ENCODE measurements at regions of chr15 and their contacts with region 1.

Region 1: GRCh38 chr15:40405501-40406381 is at the start of gene IVD:
- DNase-seq: peak; percentile 84
- ATAC-seq: peak; percentile 97
- H3K4me3 ChIP-seq: peak within 1 kb of the TSS; percentile 52 to 81 (median 70)
- H3K4me3 Mint-ChIP-seq: peak within 1 kb of the TSS; percentile 94
- H3K27ac ChIP-seq: peak within 1 kb of the TSS; percentile 59 to 84
- H3K27ac Mint-ChIP-seq: peak within 1 kb of the TSS; percentile 89
- H3K4me1 ChIP-seq: peaks cover 24 to 29% of the 10 kb centered on the region in 2 donors
- H3K4me1 Mint-ChIP-seq: peaks cover 35% of the 10 kb centered on the region
- H3K27me3 ChIP-seq: no peaks in the 10 kb centered on the region
- H3K27me3 Mint-ChIP-seq: no peaks in the 10 kb centered on the region
- CTCF ChIP-seq: no peak
- total RNA-seq, gene IVD: 106 and 114 TPM in 2 replicates

Region 2: DNA sequence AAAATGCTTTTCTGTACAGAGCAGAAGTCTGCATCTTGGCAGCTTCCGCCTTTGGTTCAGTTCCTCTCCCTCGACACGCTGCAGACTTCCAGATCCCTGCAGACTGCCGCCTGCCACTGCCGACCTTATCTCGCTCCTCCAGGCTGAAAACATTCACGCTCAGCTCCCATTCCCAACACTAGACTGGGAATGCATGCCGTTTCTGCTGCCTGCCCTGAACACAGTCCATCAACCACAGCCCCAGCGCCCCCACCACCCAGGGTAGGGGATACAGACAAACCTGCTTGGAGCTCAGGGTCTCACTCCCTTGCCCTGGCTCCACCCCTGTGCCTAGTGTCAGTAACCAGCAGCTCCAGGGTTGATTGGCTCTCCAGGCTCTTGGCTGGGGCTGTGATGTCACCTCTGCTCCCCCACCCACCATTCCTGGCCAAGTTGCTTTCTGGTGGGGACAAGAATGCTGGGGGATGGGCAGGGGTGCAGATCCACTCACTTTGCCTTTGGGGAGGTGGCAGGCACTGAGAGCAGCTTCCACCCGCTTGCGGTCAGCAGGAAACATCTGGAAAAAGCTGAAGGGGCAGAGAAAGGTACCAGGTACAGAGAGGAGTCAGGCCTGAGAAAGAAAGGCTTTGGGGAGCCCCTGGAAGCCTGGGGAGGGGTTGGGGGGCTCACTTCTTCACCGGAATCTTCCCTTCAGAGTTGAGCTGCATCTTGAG is 104.1 kb before region 1 on chr15:
- CTCF ChIA-PET with region 1: no interaction called
- POLR2A ChIA-PET with region 1: no interaction called
- intact Hi-C with region 1: no loop called
- DNase-seq: no peak
- ATAC-seq: no peak
- H3K4me3 ChIP-seq: no peak overlapping the region
- H3K4me3 Mint-ChIP-seq: no peak overlapping the region
- H3K27ac ChIP-seq: no peak overlapping the region
- H3K27ac Mint-ChIP-seq: no peak overlapping the region
- H3K4me1 ChIP-seq: peaks cover 7% of the 10 kb centered on the region in 2 donors
- H3K4me1 Mint-ChIP-seq: peaks cover 15% of the 10 kb centered on the region
- H3K27me3 ChIP-seq: no peaks in the 10 kb centered on the region
- H3K27me3 Mint-ChIP-seq: no peaks in the 10 kb centered on the region
- CTCF ChIP-seq: no peak

Region 3: DNA sequence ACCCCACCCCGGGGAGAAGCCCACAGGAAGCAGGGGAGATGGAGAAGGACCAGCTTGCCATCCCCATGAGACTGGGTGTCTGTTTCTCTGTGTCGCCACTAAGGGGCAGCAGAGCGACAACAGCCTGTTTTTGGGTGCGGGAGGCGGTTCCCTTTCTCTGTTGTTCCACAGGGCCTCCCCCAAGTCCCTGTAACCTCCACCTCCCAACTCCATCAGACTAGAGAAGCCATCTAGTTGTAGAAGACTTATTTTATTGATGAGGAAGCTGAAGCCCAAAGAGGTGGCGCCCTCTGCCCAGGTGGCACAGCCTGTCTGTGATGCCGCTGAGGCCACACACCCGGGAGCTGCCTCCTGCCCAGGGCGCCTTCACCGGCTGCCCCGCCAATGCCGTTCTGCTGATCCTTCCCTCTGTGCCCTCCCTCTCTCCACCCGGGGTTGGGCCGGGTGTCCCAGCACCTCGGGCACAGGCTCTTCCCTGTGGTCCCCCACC is 61.1 kb before region 1 on chr15:
- CTCF ChIA-PET with region 1: interaction called, 15 read pairs
- POLR2A ChIA-PET with region 1: interaction called, 3 read pairs
- intact Hi-C with region 1: no loop called
- DNase-seq: peak; percentile 77
- ATAC-seq: peak; percentile 88
- H3K4me3 ChIP-seq: no peak overlapping the region
- H3K4me3 Mint-ChIP-seq: no peak overlapping the region
- H3K27ac ChIP-seq: no peak overlapping the region
- H3K27ac Mint-ChIP-seq: no peak overlapping the region
- H3K4me1 ChIP-seq: no peaks in the 10 kb centered on the region
- H3K4me1 Mint-ChIP-seq: no peaks in the 10 kb centered on the region
- H3K27me3 ChIP-seq: no peaks in the 10 kb centered on the region
- H3K27me3 Mint-ChIP-seq: no peaks in the 10 kb centered on the region
- CTCF ChIP-seq: peak; percentile 83

Region 4: GRCh38 chr15:40367686-40368611 is 37.8 kb before region 1 on chr15:
- CTCF ChIA-PET with region 1: interaction called, 32 read pairs
- POLR2A ChIA-PET with region 1: interaction called, 3 read pairs
- intact Hi-C with region 1: loop called (anchors 1 kb)
- DNase-seq: peak; percentile 94
- ATAC-seq: peak; percentile 92
- H3K4me3 ChIP-seq: peak overlapping the region; percentile 21 to 62 (median 57)
- H3K4me3 Mint-ChIP-seq: peak overlapping the region; percentile 86
- H3K27ac ChIP-seq: peak overlapping the region; percentile 26 to 43
- H3K27ac Mint-ChIP-seq: peak overlapping the region; percentile 83
- H3K4me1 ChIP-seq: peaks cover 14 to 26% of the 10 kb centered on the region in 2 donors
- H3K4me1 Mint-ChIP-seq: peaks cover 22% of the 10 kb centered on the region
- H3K27me3 ChIP-seq: no peaks in the 10 kb centered on the region
- H3K27me3 Mint-ChIP-seq: no peaks in the 10 kb centered on the region
- CTCF ChIP-seq: peak; percentile 94

Region 5: GRCh38 chr15:40382580-40383456 is 22.9 kb before region 1 on chr15 and contains the start of gene KNSTRN:
- CTCF ChIA-PET with region 1: no interaction called
- POLR2A ChIA-PET with region 1: interaction called, 8 read pairs
- intact Hi-C with region 1: loop called (anchors 1 kb)
- DNase-seq: peak; percentile 93
- ATAC-seq: peak; percentile 100
- H3K4me3 ChIP-seq: peak within 1 kb of the TSS; percentile 53 to 89 (median 84)
- H3K4me3 Mint-ChIP-seq: peak within 1 kb of the TSS; percentile 98
- H3K27ac ChIP-seq: peak within 1 kb of the TSS in 1 of 2 donors; percentile 40
- H3K27ac Mint-ChIP-seq: peak within 1 kb of the TSS; percentile 82
- H3K4me1 ChIP-seq: peaks cover 6 to 13% of the 10 kb centered on the region in 2 donors
- H3K4me1 Mint-ChIP-seq: peaks cover 12% of the 10 kb centered on the region
- H3K27me3 ChIP-seq: no peaks in the 10 kb centered on the region
- H3K27me3 Mint-ChIP-seq: no peaks in the 10 kb centered on the region
- CTCF ChIP-seq: no peak
- total RNA-seq, gene KNSTRN: 12.6 and 14.0 TPM in 2 replicates

Region 6: DNA sequence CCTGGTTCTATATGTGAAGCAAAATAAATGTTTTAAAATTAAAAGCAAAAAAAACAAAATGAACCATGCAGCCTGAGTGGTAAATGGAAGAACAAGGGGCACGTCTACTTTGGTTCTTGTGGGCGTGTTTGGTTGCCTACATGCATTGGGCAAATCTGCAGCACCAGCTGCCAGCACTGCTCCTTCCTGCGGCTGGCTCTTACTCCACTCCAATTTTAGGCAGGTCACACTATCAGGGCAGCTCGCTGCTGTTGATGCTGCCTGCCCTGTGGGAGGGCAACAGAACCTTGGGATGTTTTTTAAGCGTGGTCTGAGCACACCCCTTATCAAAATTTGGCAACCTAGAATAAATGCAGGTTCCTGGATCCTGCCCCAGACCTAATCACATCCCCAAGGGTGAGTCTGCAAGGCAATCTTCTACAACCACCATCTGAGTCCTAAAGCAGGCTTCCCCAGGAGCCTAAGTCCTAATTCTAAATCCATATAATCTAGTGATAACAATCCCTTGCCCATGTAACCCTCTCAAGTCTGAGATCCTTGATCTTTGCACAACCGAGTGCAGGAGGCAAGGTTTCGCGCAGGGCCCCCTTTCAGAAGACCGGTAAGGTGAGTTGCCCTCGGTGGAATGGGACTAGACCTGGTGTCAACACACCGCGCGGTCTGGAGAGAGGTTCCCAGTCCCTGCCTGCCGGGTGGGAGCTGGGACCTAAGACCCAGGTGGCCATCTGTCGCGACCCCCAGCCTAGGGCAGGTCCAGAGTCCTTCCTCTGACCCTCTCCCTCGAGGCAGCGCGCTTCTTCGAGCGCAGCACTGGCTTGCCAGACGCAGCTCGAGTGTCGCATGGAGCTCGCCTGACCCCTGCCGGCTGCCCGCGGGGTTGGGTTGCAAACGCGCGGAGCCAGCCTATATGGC is 15.8 kb after region 1 on chr15:
- CTCF ChIA-PET with region 1: interaction called, 26 read pairs
- POLR2A ChIA-PET with region 1: no interaction called
- intact Hi-C with region 1: no loop called
- DNase-seq: peak; percentile 83
- ATAC-seq: peak; percentile 96
- H3K4me3 ChIP-seq: no peak overlapping the region
- H3K4me3 Mint-ChIP-seq: no peak overlapping the region
- H3K27ac ChIP-seq: no peak overlapping the region
- H3K27ac Mint-ChIP-seq: no peak overlapping the region
- H3K4me1 ChIP-seq: peaks cover 4 to 7% of the 10 kb centered on the region in 2 donors
- H3K4me1 Mint-ChIP-seq: peaks cover 2% of the 10 kb centered on the region
- H3K27me3 ChIP-seq: no peaks in the 10 kb centered on the region
- H3K27me3 Mint-ChIP-seq: no peaks in the 10 kb centered on the region
- CTCF ChIP-seq: peak; percentile 97

Region 7: GRCh38 chr15:40440743-40441564 is 35.2 kb after region 1 on chr15 and contains the start of gene BAHD1:
- CTCF ChIA-PET with region 1: interaction called, 3 read pairs
- POLR2A ChIA-PET with region 1: interaction called, 4 read pairs
- intact Hi-C with region 1: loop called (anchors 5 kb)
- DNase-seq: peak; percentile 94
- ATAC-seq: peak; percentile 90
- H3K4me3 ChIP-seq: peak within 1 kb of the TSS; percentile 15 to 80 (median 59)
- H3K4me3 Mint-ChIP-seq: peak within 1 kb of the TSS; percentile 91
- H3K27ac ChIP-seq: peak within 1 kb of the TSS in 1 of 2 donors; percentile 48
- H3K27ac Mint-ChIP-seq: peak within 1 kb of the TSS; percentile 89
- H3K4me1 ChIP-seq: peaks cover 37 to 44% of the 10 kb centered on the region in 2 donors
- H3K4me1 Mint-ChIP-seq: peaks cover 61% of the 10 kb centered on the region
- H3K27me3 ChIP-seq: peaks cover 0 to 35% (median 15%) of the 10 kb centered on the region in 4 experiments
- H3K27me3 Mint-ChIP-seq: peaks cover 25% of the 10 kb centered on the region
- CTCF ChIP-seq: no peak
- total RNA-seq, gene BAHD1: 34.7 and 34.8 TPM in 2 replicates

Region 8: GRCh38 chr15:40470423-40471104 is 64.8 kb after region 1 on chr15 and contains the start of gene CHST14:
- CTCF ChIA-PET with region 1: no interaction called
- POLR2A ChIA-PET with region 1: no interaction called
- intact Hi-C with region 1: loop called (anchors 2 kb)
- DNase-seq: peak; percentile 69
- ATAC-seq: peak; percentile 87
- H3K4me3 ChIP-seq: peak within 1 kb of the TSS; percentile 53 to 84 (median 79)
- H3K4me3 Mint-ChIP-seq: peak within 1 kb of the TSS; percentile 94
- H3K27ac ChIP-seq: peak within 1 kb of the TSS; percentile 73 to 76
- H3K27ac Mint-ChIP-seq: peak within 1 kb of the TSS; percentile 95
- H3K4me1 ChIP-seq: peaks cover 6 to 18% of the 10 kb centered on the region in 2 donors
- H3K4me1 Mint-ChIP-seq: peaks cover 15% of the 10 kb centered on the region
- H3K27me3 ChIP-seq: no peaks in the 10 kb centered on the region
- H3K27me3 Mint-ChIP-seq: no peaks in the 10 kb centered on the region
- CTCF ChIP-seq: no peak
- total RNA-seq, gene CHST14: 14.7 and 16.7 TPM in 2 replicates

Measured in B cell (primary cell).